A549 (cell line): ENCODE measurements at regions of chr2 and their contacts with region 1.

Region 1: GRCh38 chr2:149587220-149587949 is at the start of gene MMADHC:
- DNase-seq: peak; percentile 79 to 97
- ATAC-seq: peak; percentile 97 to 98
- H3K4me3 ChIP-seq: peak within 1 kb of the TSS; percentile 80
- H3K27ac ChIP-seq: peak within 1 kb of the TSS; percentile 98 to 99
- H3K4me1 ChIP-seq: peaks cover 16% of the 10 kb centered on the region; the same call in 2 of the 3 replicates
- CTCF ChIP-seq: no peak
- EP300 ChIP-seq: no peak
- POLR2A ChIP-seq: peak; percentile 93
- RAD21 ChIP-seq: no peak
- polyA plus RNA-seq, gene MMADHC: 140 and 180 TPM in 2 replicates

Region 2: DNA sequence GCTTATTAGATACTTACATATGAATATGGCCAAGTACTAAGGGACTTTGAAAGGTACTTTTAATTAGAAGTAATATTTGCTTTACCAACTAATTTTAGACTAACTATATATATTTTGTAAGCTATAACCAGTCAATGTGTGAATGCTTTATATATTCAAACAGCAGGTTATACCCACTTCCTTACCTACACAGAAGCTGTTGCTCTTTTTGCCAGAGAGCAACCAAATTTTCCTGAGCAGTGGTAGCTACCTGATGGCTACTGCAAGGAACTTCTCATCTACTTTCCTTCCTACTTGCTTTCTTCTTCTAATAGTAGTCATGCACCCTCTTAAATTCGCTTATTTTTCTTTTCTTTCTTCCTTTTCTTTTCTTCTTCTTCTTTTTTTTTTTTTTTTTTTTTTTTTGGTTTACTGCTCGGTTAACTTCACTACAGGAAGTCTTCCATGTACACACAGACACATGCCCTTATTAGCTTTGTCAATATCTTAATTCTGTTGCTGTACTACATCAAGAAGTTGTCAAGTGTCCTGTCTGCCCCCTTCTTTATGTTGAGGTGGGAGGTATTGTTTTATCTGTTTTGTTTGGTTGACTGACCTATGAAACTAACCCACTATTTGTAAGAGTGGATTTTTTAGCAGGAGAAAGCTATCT is 847.8 kb before region 1 on chr2:
- CTCF ChIA-PET with region 1: no interaction called
- POLR2A ChIA-PET with region 1: interaction called, 10 read pairs
- DNase-seq: no peak
- ATAC-seq: no peak
- H3K4me3 ChIP-seq: no peak overlapping the region
- H3K27ac ChIP-seq: no peak overlapping the region
- H3K4me1 ChIP-seq: no peaks in the 10 kb centered on the region
- CTCF ChIP-seq: no peak
- EP300 ChIP-seq: no peak
- POLR2A ChIP-seq: no peak
- RAD21 ChIP-seq: no peak

Region 3: DNA sequence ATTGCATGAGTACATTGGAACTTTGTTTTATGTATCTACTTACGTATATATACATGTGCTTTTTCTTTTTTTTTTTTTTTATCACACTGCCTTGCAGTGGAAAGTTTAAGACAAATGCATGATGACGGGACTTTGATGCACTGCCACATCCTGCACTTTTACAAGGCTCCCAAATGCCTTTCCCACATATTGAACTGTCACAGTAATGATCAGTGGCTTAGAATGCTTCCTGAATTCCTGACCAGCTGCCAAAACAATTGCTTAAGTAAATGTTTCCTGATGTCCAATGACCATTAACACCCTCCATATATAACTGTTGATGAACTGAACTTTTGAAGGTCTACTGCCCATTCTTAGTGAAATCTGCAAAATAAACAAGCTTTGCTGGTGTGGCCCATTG is 488.7 kb before region 1 on chr2:
- CTCF ChIA-PET with region 1: no interaction called
- POLR2A ChIA-PET with region 1: no interaction called
- DNase-seq: no peak
- ATAC-seq: no peak
- H3K4me3 ChIP-seq: no peak overlapping the region
- H3K27ac ChIP-seq: no peak overlapping the region
- H3K4me1 ChIP-seq: no peaks in the 10 kb centered on the region
- CTCF ChIP-seq: no peak
- EP300 ChIP-seq: no peak
- POLR2A ChIP-seq: no peak
- RAD21 ChIP-seq: no peak

Region 4: GRCh38 chr2:149559341-149560068 is 27.9 kb before region 1 on chr2:
- CTCF ChIA-PET with region 1: no interaction called
- POLR2A ChIA-PET with region 1: no interaction called
- DNase-seq: no peak
- ATAC-seq: no peak
- H3K4me3 ChIP-seq: no peak overlapping the region
- H3K27ac ChIP-seq: no peak overlapping the region
- H3K4me1 ChIP-seq: peaks cover 4% of the 10 kb centered on the region; the same call in 1 of the 3 replicates
- CTCF ChIP-seq: no peak
- EP300 ChIP-seq: no peak
- POLR2A ChIP-seq: no peak
- RAD21 ChIP-seq: no peak

Region 5: DNA sequence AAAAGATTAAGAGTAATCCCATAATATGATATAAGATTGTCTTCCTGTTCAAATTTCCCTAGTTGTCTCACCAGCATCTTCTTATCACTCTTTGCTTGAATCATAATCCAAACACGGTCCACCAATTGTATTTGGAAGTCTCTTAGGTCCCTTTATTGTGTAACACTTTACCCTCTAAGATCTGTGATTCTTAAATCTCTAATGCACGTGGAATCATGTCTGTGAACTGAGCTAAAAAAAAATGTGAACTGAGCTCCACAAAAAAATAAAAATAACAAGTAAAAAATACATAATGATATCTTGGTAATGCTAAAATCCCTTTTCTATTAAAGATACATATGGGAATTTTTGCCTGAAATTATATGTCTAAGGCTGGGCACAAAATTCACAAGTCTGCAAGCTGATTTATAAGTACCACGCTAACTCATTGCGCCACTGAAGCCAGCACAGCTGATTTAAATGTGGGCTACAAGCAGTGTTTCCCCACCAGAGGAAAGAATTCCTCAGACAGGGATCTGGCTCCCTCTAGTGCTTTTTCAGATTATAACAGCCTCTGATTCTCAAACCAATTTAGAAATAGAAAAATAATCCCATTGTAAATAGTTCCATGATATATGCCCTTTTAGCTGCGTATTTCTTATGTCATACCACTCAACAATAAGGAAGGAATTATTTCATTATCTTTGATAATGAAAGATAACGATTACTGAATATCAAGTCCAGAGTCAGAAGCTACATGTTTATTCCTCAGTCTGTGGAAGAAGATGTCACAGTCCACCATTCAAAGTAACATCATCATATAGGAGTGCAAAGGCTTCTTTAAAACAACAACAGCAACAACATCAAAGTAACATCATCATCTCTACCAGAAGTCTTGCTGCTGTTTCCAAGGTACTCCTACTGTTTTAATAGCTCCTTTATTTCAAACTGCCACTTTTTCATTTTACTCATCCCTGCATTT is 1651.4 kb after region 1 on chr2:
- CTCF ChIA-PET with region 1: interaction called, 96 read pairs
- POLR2A ChIA-PET with region 1: no interaction called
- DNase-seq: peak; percentile 49 to 62
- ATAC-seq: peak; percentile 83 to 84; a peak in 5 of 6 replicates
- H3K4me3 ChIP-seq: no peak overlapping the region
- H3K27ac ChIP-seq: no peak overlapping the region
- H3K4me1 ChIP-seq: peaks cover 9% of the 10 kb centered on the region; the same call in 1 of the 3 replicates
- CTCF ChIP-seq: peak; percentile 91
- EP300 ChIP-seq: no peak
- POLR2A ChIP-seq: no peak
- RAD21 ChIP-seq: peak; percentile 92 to 96